CD4-positive, alpha-beta memory T cell (primary cell): ENCODE measurements at regions of chr14 and their contacts with region 1.

Region 1: DNA sequence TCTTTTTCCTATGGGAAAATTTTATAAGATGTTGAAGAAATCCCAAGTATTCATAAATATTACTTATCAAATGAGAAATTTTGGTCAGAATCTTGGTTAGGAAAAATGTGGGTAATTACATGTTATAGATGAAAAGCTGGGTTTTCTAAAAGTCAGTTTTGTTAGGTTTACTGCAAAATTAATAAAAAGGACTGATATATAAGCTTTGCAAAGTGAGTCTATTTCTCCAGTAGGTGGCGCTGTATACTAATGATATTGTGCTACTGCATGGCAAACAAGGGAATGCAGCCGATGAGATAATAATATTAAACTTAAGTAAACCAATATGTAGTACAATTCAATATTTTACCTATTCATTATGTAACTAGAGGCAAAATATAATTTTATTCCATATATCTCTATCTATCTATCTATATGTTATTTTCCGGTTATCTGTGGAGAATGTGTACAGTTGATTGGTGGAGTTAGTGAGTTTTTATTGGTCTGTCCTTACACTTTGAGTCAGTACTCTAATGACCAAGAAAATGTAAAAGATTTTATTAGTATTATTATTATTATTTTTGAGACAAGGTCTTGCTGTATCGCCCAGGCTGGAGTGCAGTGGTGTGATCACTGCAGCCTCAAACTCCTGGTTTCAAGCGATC is 32.9 kb downstream of the MIPOL1 start:
- DNase-seq: peak in 4 of 5 donors; percentile 7 to 25 (median 16)
- H3K4me3 ChIP-seq: no peak overlapping the region
- H3K4me3 Mint-ChIP-seq: no peak overlapping the region
- H3K27ac ChIP-seq: no peak overlapping the region
- H3K27ac Mint-ChIP-seq: no peak overlapping the region
- H3K4me1 ChIP-seq: no peaks in the 10 kb centered on the region
- H3K4me1 Mint-ChIP-seq: no peaks in the 10 kb centered on the region
- H3K27me3 ChIP-seq: no peaks in the 10 kb centered on the region
- H3K27me3 Mint-ChIP-seq: no peaks in the 10 kb centered on the region

Region 2: GRCh38 chr14:37874429-37875191 is 643.9 kb after region 1 on chr14:
- CTCF ChIA-PET with region 1: no interaction called
- POLR2A ChIA-PET with region 1: no interaction called
- intact Hi-C with region 1: loop called (anchors 5 kb)
- DNase-seq: peak; percentile 58 to 76 (median 63)
- H3K4me3 ChIP-seq: no peak overlapping the region
- H3K4me3 Mint-ChIP-seq: peak overlapping the region in 2 of 8 donors; percentile 3 to 45
- H3K27ac ChIP-seq: no peak overlapping the region
- H3K27ac Mint-ChIP-seq: peak overlapping the region in 1 of 7 donors; percentile 14
- H3K4me1 ChIP-seq: peaks cover 5% of the 10 kb centered on the region
- H3K4me1 Mint-ChIP-seq: peaks cover 6 to 7% (median 7%) of the 10 kb centered on the region in 4 donors
- H3K27me3 ChIP-seq: no peaks in the 10 kb centered on the region
- H3K27me3 Mint-ChIP-seq: peaks cover 0 to 2% of the 10 kb centered on the region in 2 donors